Gastrocnemius medialis (tissue), 4 donors: ENCODE measurements at regions of chr2 and their contacts with region 1.

Region 1: GRCh38 chr2:10036095-10036884 is 7.1 kb upstream of the KLF11 start:
- DNase-seq: peak; percentile 91 to 92
- ATAC-seq: peak; percentile 84 to 87
- H3K4me3 ChIP-seq: peak overlapping the region in 1 of 4 donors; percentile 18
- H3K27ac ChIP-seq: peak overlapping the region; percentile 76 to 87 (median 84)
- H3K4me1 ChIP-seq: peaks cover 43 to 49% of the 10 kb centered on the region in 2 donors
- H3K27me3 ChIP-seq: no peaks in the 10 kb centered on the region
- CTCF ChIP-seq: peak; percentile 47 to 69 (median 57)
- POLR2A ChIP-seq: no peak

Region 2: DNA sequence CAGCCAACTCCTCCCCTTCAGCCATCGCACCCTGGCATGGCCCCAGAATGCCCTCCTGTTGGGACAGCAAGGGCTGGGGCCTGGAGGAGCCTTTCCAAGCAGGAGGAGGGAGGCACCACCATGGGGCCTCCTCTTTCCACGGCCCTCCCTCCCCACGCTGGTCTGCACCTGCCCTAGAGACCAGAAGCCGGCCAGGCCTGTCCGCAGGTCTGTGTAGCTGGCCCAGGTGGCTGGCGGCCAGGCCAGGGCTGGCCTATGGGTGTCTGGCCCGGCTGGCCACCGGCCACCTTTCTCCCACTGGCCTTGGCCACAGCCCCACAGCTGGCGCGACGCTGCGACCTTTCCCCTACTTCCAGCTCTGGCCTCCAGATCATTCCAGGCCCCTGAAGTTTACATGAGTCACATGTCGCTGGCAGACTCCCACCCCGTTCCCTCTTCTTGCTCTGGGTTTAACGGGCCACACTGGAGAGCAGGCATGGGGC is 26.4 kb before region 1 on chr2:
- in situ Hi-C with region 1: no loop called
- intact Hi-C with region 1: loop called (anchors 1 kb)
- DNase-seq: peak; percentile 26 to 79
- ATAC-seq: peak; percentile 51 to 80
- H3K4me3 ChIP-seq: no peak overlapping the region
- H3K27ac ChIP-seq: peak overlapping the region; percentile 57 to 74 (median 60)
- H3K4me1 ChIP-seq: peaks cover 27 to 38% of the 10 kb centered on the region in 2 donors
- H3K27me3 ChIP-seq: no peaks in the 10 kb centered on the region
- CTCF ChIP-seq: no peak
- POLR2A ChIP-seq: no peak

Region 3: GRCh38 chr2:10812362-10813162 is 776.3 kb after region 1 on chr2 and contains the start of gene PDIA6:
- in situ Hi-C with region 1: no loop called
- intact Hi-C with region 1: loop called (anchors 5 kb)
- DNase-seq: peak; percentile 96 to 97
- ATAC-seq: peak; percentile 94 to 97
- H3K4me3 ChIP-seq: peak within 1 kb of the TSS; percentile 64 to 87 (median 75)
- H3K27ac ChIP-seq: peak within 1 kb of the TSS; percentile 77 to 94 (median 89)
- H3K4me1 ChIP-seq: peaks cover 20 to 25% of the 10 kb centered on the region in 2 donors
- H3K27me3 ChIP-seq: no peaks in the 10 kb centered on the region
- CTCF ChIP-seq: peak in 4 of 5 experiments; percentile 17 to 49 (median 38)
- POLR2A ChIP-seq: peak; percentile 86 to 87
- total RNA-seq, gene PDIA6: 32.0 to 72.4 (median 54.2) TPM